Heart right ventricle (tissue), 16 donors: ENCODE measurements at regions of chr18 and their contacts with region 1.

Region 1: GRCh38 chr18:74861154-74861553 is 263.5 kb downstream of the ZNF407 start:
- DNase-seq: no peak
- ATAC-seq: peak in 7 of 8 donors; percentile 7 to 41 (median 33)
- H3K4me3 ChIP-seq: no peak overlapping the region
- H3K27ac ChIP-seq: peak overlapping the region in 8 of 10 donors; percentile 18 to 77 (median 53)
- H3K4me1 ChIP-seq: peaks cover 0 to 27% (median 2%) of the 10 kb centered on the region in 9 donors
- H3K27me3 ChIP-seq: no peaks in the 10 kb centered on the region
- CTCF ChIP-seq: no peak

Region 2: GRCh38 chr18:74804677-74805076 is 56.5 kb before region 1 on chr18:
- intact Hi-C with region 1: loop called in 2 of 10 experiments (anchors 5 kb)
- DNase-seq: no peak
- ATAC-seq: no peak
- H3K4me3 ChIP-seq: peak overlapping the region in 3 of 10 donors; percentile 10 to 36 (median 30)
- H3K27ac ChIP-seq: peak overlapping the region in 4 of 10 donors; percentile 11 to 57 (median 44)
- H3K4me1 ChIP-seq: peaks cover 0 to 9% (median 0%) of the 10 kb centered on the region in 9 donors
- H3K27me3 ChIP-seq: no peaks in the 10 kb centered on the region
- CTCF ChIP-seq: no peak